ENCODE measurements at regions of chr1 and their contacts with region 1.

Region 1: DNA sequence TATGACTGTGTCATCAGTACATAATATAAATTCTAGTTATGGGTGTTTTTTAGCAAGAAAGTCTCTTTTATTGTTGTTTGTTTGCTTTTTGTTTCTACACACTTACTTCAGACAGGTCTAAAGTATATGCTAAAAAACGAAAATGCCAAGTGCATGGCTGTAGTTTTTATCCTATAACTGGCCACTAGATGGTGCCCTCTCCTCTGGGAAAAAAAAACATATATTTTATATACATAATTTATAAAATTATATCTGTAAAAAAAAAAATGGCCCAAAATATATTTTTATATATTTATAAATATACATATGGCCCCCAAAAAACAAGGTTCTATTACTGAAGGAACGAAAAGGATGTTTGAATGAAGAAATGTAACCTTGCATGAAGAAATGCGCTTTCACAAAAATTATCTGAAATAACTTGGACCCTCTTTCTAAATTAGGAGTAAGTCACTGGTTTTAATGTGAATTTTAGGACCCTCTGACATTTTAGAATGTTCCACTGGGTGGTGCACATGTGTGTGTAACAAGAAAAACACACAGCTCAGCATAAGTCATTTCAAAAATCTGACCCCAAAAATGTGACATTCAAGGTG is 93.5 kb downstream of the TTLL7 start:
- DNase-seq: no peak
- H3K4me3 ChIP-seq: no peak overlapping the region
- H3K27ac ChIP-seq: no peak overlapping the region
- H3K4me1 ChIP-seq: no peaks in the 10 kb centered on the region
- H3K27me3 ChIP-seq: no peaks in the 10 kb centered on the region
- CTCF ChIP-seq: peak; percentile 74

Region 2: DNA sequence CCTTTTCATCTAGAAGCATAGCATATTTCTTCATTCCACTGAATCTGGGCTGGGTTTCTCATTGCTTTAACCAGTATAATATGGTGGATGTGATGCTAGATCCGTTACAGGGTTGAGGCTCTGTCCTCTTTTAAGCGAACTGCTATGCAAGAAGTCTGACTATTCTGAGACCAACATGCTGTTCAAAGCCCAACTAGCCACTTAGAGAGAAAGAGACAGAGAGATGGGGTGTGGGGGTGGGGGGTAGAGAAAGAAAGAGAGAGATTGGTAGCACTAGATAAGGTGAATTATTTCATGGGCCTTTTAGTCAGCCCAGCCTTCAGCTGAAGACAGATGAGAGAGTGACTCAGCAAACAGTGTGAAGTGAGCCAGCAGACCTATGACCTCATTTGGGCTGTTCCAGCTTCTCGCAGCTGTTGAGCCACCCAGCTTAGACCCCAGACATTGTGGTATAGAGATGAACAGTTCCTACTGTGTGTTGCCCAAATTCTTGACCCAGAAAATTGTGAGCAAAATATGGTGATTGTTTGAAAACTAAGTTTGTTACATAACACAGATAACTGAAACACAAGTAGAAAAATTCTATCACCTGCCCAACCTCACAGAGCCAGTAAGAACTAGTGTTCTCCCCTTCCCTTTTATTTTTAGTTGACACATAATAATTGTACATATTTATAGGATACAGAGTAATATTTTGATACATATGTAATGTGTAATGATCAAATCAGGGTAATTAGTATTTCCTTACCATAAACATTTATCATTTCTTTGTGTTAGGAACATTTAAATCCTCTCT is 198.0 kb after region 1 on chr1:
- intact Hi-C with region 1: no loop called
- DNase-seq: peak; percentile 37
- H3K4me3 ChIP-seq: no peak overlapping the region
- H3K27ac ChIP-seq: peak overlapping the region; percentile 37
- H3K4me1 ChIP-seq: peaks cover 17% of the 10 kb centered on the region
- H3K27me3 ChIP-seq: no peaks in the 10 kb centered on the region
- CTCF ChIP-seq: no peak

Region 3: GRCh38 chr1:84772428-84772943 is 867.1 kb after region 1 on chr1:
- intact Hi-C with region 1: loop called (anchors 10 kb)
- DNase-seq: peak; percentile 56
- H3K4me3 ChIP-seq: no peak overlapping the region
- H3K27ac ChIP-seq: no peak overlapping the region
- H3K4me1 ChIP-seq: no peaks in the 10 kb centered on the region
- H3K27me3 ChIP-seq: no peaks in the 10 kb centered on the region
- CTCF ChIP-seq: peak; percentile 92